ENCODE measurements at regions of chr14 and their contacts with region 1.

Region 1: GRCh38 chr14:38839743-38840365 is 263.2 kb downstream of the SEC23A start:
- DNase-seq: no peak
- ATAC-seq: no peak
- H3K4me3 ChIP-seq: no peak overlapping the region
- H3K27ac ChIP-seq: no peak overlapping the region
- H3K4me1 ChIP-seq: no peaks in the 10 kb centered on the region
- H3K27me3 ChIP-seq: no peaks in the 10 kb centered on the region
- CTCF ChIP-seq: no peak
- EP300 ChIP-seq: no peak
- POLR2A ChIP-seq: no peak
- RAD21 ChIP-seq: no peak

Region 2: DNA sequence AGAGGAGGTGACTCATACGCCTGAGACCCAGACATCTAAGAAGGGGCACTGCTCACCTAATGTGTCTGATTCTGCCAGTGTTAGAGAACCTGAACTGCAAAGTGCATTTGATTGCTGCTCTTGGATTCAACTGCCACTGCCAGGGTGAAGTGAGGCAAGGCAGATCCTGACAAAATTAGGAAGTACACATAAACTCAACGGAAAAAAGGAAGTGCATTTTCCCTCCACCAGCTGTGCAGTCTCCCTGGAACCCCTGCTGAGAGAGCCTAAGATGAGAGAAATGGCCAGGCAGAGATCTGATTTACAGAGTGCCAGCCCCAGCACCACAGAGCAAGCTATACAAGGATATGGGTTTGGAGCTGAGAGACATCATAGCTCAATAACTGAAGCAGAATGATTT is 47.8 kb after region 1 on chr14:
- CTCF ChIA-PET with region 1: no interaction called
- POLR2A ChIA-PET with region 1: no interaction called
- RAD21 ChIA-PET with region 1: no interaction called
- SMC1A ChIA-PET with region 1: no interaction called
- in situ Hi-C with region 1: no loop called
- intact Hi-C with region 1: loop called (anchors 5 kb)
- DNase-seq: no peak
- ATAC-seq: no peak
- H3K4me3 ChIP-seq: no peak overlapping the region
- H3K27ac ChIP-seq: no peak overlapping the region
- H3K4me1 ChIP-seq: no peaks in the 10 kb centered on the region
- H3K27me3 ChIP-seq: no peaks in the 10 kb centered on the region
- CTCF ChIP-seq: no peak
- EP300 ChIP-seq: no peak
- POLR2A ChIP-seq: no peak
- RAD21 ChIP-seq: no peak